ENCODE measurements at regions of chr5 and their contacts with region 1.

Region 1: DNA sequence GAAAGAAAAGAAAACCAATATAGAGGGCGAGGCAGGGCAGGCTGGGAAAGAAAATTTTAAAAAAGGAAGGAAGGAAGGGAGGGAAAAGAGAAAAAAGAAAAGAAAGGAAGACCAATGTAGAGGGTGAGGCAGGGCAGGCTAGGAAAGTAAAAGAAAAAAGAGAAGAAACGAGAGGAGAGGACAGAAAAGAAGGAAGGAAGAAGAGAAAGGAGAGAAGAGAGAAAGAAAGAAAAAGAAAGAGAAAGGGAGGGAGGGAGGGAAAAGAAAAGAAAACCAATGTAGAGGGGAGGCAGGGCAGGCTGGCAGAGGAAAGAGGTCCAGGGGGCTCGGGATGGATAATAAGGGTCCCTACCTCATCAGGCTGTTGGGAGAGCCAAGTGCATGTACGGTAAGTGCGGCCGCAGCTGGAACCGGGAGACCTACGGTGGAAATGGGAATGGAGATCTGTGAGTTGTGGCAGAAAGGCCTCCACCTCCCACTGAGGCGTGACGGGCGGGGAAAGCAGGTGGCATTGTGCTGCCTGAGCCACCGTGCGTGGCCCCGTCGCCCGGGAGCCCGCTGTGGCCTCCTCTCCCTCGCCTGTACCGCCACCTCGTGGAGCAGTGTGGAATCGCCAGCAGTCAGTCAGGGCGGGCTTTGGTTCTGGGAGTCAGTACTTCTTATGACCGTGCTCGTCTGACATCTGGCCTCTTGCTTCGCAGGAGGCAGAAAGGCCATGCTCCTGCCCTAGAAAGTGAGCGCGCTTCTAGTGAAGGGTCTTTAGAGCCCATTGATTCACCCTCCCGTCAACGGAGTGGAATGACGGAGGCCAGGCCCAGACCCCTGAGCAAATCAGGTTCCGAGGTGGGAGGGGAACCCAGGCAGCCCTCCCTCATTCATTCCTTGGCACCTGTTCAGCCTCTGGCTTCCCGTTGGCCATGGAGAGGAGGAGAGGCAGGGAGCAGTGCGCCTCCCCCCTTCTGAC is 10.4 kb upstream of the NHP2 start:
- DNase-seq: peak; percentile 85 to 98 (median 92)
- ATAC-seq: peak; percentile 100
- H3K4me3 ChIP-seq: no peak overlapping the region
- H3K4me3 Mint-ChIP-seq: no peak overlapping the region
- H3K27ac ChIP-seq: no peak overlapping the region
- H3K27ac Mint-ChIP-seq: no peak overlapping the region
- H3K4me1 ChIP-seq: peaks cover 7% of the 10 kb centered on the region
- H3K4me1 Mint-ChIP-seq: peaks cover 4% of the 10 kb centered on the region
- H3K27me3 ChIP-seq: peaks cover 0 to 6% of the 10 kb centered on the region in 2 experiments
- H3K27me3 Mint-ChIP-seq: peaks cover 10% of the 10 kb centered on the region
- CTCF ChIP-seq: peak; percentile 96

Region 2: GRCh38 chr5:177982072-177982727 is 181.9 kb before region 1 on chr5:
- CTCF ChIA-PET with region 1: interaction called, 3 read pairs
- POLR2A ChIA-PET with region 1: no interaction called
- intact Hi-C with region 1: loop called in 1 of 2 experiments (anchors 5 kb)
- DNase-seq: peak in 5 of 9 experiments; percentile 15 to 47 (median 27)
- ATAC-seq: peak; percentile 40
- H3K4me3 ChIP-seq: no peak overlapping the region
- H3K4me3 Mint-ChIP-seq: no peak overlapping the region
- H3K27ac ChIP-seq: no peak overlapping the region
- H3K27ac Mint-ChIP-seq: no peak overlapping the region
- H3K4me1 ChIP-seq: peaks cover 14% of the 10 kb centered on the region
- H3K4me1 Mint-ChIP-seq: peaks cover 9% of the 10 kb centered on the region
- H3K27me3 ChIP-seq: peaks cover 24 to 32% of the 10 kb centered on the region in 2 experiments
- H3K27me3 Mint-ChIP-seq: peaks cover 48% of the 10 kb centered on the region
- CTCF ChIP-seq: no peak

Measured in CD8-positive, alpha-beta T cell (primary cell).